ENCODE measurements at regions of chr2 and their contacts with region 1.

Region 1: DNA sequence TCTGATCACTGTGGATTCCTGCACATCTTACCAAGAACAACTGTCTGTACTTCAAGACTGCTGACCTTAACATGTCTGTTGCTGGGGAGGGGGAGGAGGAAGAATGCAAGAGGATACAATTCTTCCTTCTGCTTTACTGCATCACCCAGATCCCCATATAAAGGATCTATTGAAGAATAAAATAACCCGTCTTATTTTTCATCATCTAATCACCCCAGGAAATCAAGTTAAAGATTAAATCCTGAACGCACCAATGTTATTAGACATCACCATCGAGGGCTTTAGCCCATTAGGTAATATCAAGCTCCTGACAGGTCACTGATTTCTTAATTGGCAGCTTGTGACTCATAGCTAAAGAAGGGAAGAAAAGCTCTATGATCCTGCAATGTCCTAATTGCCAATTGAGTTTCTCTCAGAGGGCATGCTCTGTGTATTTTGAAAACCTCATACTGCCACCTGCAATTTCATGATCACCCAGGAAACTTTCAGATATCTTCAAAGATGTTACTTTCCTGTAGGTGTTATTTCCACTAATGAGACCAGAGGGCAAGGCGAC is 75.4 kb upstream of the KCNE4 start:
- DNase-seq: no peak
- H3K4me3 ChIP-seq: no peak overlapping the region
- H3K27ac ChIP-seq: no peak overlapping the region
- H3K4me1 ChIP-seq: no peaks in the 10 kb centered on the region
- H3K27me3 ChIP-seq: no peaks in the 10 kb centered on the region
- CTCF ChIP-seq: no peak
- POLR2A ChIP-seq: no peak

Region 2: GRCh38 chr2:223101340-223102039 is 124.9 kb after region 1 on chr2:
- intact Hi-C with region 1: loop called in 1 of 2 experiments (anchors 5 kb)
- DNase-seq: no peak
- H3K4me3 ChIP-seq: no peak overlapping the region
- H3K27ac ChIP-seq: no peak overlapping the region
- H3K4me1 ChIP-seq: peaks cover 0 to 3% of the 10 kb centered on the region in 2 donors
- H3K27me3 ChIP-seq: no peaks in the 10 kb centered on the region
- CTCF ChIP-seq: peak; percentile 13 to 54 (median 41)
- POLR2A ChIP-seq: no peak

Region 3: GRCh38 chr2:223142153-223142552 is 165.6 kb after region 1 on chr2:
- intact Hi-C with region 1: no loop called
- DNase-seq: no peak
- H3K4me3 ChIP-seq: no peak overlapping the region
- H3K27ac ChIP-seq: no peak overlapping the region
- H3K4me1 ChIP-seq: no peaks in the 10 kb centered on the region
- H3K27me3 ChIP-seq: no peaks in the 10 kb centered on the region
- CTCF ChIP-seq: no peak
- POLR2A ChIP-seq: no peak

Region 4: DNA sequence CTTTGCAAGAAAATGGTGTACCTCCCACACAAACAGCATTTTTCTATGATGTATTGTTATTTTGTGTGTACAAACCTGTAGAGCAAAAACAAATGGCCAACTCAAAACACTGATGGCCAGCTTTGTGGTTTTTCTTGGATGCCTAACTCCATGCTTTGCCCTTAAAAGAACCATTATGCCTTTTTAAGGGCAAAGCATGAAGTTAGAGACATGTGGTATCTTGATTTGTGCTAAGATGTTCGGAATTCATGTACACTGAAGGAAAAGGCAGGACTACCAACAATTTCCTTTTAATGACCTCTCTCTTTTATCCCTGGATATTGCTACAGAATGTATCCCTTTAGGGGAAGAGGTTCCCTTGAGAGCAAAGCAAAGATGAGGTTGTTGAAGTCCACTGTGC is 352.0 kb after region 1 on chr2:
- intact Hi-C with region 1: no loop called
- DNase-seq: no peak
- H3K4me3 ChIP-seq: no peak overlapping the region
- H3K27ac ChIP-seq: no peak overlapping the region
- H3K4me1 ChIP-seq: no peaks in the 10 kb centered on the region
- H3K27me3 ChIP-seq: no peaks in the 10 kb centered on the region
- CTCF ChIP-seq: no peak
- POLR2A ChIP-seq: no peak